Right cardiac atrium (tissue), 5 donors: ENCODE measurements at regions of chr7 and their contacts with region 1.

Region 1: GRCh38 chr7:76086070-76086469 is 38.2 kb downstream of the MDH2 start:
- DNase-seq: no peak
- ATAC-seq: no peak
- H3K4me3 ChIP-seq: no peak overlapping the region
- H3K27ac ChIP-seq: no peak overlapping the region
- H3K4me1 ChIP-seq: peaks cover 7% of the 10 kb centered on the region
- H3K27me3 ChIP-seq: no peaks in the 10 kb centered on the region

Region 2: GRCh38 chr7:75878769-75879611 is 207.1 kb before region 1 on chr7 and contains the start of gene RHBDD2:
- intact Hi-C with region 1: no loop called
- DNase-seq: peak; percentile 97 to 99 (median 98)
- ATAC-seq: peak; percentile 98
- H3K4me3 ChIP-seq: peak within 1 kb of the TSS; percentile 73
- H3K27ac ChIP-seq: peak within 1 kb of the TSS; percentile 85
- H3K4me1 ChIP-seq: peaks cover 2% of the 10 kb centered on the region
- H3K27me3 ChIP-seq: no peaks in the 10 kb centered on the region
- total RNA-seq, gene RHBDD2: 31.8 to 42.4 (median 35.9) TPM

Region 3: GRCh38 chr7:76037310-76037709 is 48.8 kb before region 1 on chr7:
- intact Hi-C with region 1: no loop called
- DNase-seq: no peak
- ATAC-seq: peak; percentile 76 to 83
- H3K4me3 ChIP-seq: no peak overlapping the region
- H3K27ac ChIP-seq: no peak overlapping the region
- H3K4me1 ChIP-seq: no peaks in the 10 kb centered on the region
- H3K27me3 ChIP-seq: no peaks in the 10 kb centered on the region

Region 4: DNA sequence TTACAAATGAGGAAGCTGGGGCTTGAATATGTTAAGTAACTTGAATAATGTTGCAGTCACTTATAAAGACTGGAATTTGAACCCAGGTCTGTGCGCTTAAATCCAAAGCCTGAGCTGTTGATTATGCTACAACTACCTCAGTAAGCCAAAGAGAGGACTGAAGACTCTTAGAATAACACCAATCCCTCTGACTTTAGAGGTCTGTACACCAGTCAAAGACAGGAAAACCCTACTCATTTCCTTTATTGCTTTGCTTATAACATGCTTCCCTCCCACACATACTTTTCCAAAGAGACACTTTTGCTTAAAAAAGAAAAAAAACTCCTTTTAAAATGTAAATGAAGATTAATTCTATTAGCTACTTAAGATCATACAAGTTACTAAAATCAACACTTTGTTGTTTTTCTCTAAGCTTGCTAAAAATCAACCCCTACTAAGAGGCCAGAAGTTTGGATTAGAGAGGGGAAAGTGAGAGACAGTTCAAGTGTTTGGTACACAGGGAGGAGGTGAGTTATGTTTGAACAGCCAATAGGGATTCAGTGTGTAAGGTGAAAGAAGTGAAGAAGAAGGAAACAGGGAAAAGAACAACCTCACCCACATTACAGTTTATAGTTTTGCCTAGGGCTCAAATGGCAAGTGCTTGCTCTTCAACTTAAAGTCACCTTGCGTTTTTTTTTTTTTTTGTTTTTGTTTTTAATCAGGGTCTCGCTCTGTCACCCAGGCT is 36.6 kb after region 1 on chr7:
- intact Hi-C with region 1: no loop called
- DNase-seq: no peak
- ATAC-seq: no peak
- H3K4me3 ChIP-seq: no peak overlapping the region
- H3K27ac ChIP-seq: no peak overlapping the region
- H3K4me1 ChIP-seq: no peaks in the 10 kb centered on the region
- H3K27me3 ChIP-seq: no peaks in the 10 kb centered on the region

Region 5: DNA sequence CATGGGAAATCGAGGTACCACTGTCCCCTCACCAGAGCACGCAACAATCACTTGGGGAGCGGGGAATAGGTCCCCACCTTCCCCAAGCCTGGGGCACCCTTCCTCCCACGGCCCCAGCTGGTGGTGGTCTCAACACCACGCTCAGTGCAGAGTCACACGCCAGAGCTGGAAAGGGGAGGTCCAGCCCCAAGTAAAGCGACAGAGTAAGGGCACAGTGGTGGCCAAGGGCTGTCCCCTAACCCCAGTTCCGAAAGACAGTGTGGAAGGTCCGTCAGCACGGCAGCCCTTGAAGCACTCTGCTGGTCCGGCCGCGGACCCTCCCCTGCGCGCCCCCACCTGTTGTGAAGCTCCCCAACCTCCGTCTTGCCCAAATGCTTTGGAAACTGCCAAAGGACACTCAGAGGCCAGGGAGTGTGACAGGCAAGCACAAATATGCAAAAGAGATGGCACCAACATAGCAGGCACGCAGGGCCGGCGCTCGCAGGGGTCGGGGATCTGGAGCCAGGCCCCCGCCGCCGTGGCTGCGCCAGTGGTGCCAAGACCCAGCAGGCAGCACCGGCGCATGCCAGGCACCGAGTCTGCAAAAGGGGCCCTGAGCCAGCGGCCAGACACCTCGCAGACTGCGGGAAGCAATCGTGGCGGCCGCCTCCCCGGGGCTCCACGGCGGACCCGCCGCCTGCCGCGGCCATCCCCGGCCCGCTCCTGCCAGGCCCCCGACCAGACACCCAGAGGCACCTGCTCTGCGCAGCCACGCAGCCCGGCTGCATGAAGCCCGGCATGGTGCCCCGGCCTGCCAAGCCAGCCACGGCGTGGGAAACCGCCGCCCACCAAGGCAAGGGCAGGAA is 64.0 kb after region 1 on chr7:
- intact Hi-C with region 1: loop called in 1 of 4 experiments (anchors 10 kb)
- DNase-seq: peak in 1 of 3 donors; percentile 71
- ATAC-seq: peak; percentile 33 to 62
- H3K4me3 ChIP-seq: no peak overlapping the region
- H3K27ac ChIP-seq: no peak overlapping the region
- H3K4me1 ChIP-seq: no peaks in the 10 kb centered on the region
- H3K27me3 ChIP-seq: no peaks in the 10 kb centered on the region